ENCODE measurements at regions of chr10 and their contacts with region 1.

Region 1: DNA sequence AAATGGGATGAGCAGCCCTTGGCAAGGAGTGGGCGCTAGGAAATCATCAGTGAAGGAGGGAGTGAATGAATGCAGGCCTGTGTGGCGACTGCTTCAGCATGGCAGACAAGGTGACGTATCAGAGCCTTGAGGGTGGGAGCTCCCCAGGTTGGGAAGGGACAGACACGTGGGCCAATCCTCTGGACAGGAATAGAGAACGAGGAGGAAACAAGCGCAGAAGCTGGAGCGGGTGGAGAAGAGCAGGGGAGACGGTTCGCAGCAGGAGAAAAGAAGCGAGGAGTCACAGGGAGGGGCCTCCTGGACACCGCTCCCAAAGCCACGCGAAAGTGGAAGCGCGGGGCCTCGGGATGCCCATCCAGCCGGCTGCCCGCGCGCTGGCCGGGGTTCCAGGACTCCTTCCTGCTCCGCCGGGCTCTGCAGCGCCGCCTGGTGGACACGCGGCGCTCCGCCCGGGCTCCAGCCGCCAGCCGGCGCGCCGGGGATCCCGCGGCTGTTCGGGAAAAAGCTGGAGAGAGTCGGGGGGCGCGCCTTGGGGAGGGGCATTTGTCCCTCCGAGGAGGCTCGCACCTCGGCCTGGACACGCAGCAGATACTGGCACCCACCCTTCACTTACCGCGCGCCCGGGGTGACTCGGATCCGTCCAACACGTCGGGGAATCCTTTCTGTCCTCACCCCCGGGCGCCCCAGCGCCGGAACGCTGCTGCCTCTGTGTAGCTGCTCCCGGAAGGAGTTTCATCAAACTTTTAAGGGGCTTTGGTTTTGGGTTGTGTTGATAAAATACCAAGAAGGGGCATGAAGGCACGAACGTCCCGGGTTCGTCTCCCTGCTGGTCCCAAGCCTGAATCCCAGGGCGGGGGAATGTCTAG is 6.3 kb downstream of the ZNF503 start:
- DNase-seq: no peak
- ATAC-seq: no peak
- H3K4me3 ChIP-seq: peak overlapping the region; percentile 25 to 49 (median 36)
- H3K27ac ChIP-seq: peak overlapping the region in 2 of 4 donors; percentile 54 to 58
- H3K4me1 ChIP-seq: peaks cover 0 to 14% of the 10 kb centered on the region in 2 donors
- H3K27me3 ChIP-seq: peaks cover 2 to 23% (median 22%) of the 10 kb centered on the region in 3 donors
- CTCF ChIP-seq: peak; percentile 57 to 86 (median 77)
- POLR2A ChIP-seq: no peak

Region 2: GRCh38 chr10:76036111-76036940 is 641.0 kb after region 1 on chr10:
- in situ Hi-C with region 1: loop called (anchors 10 to 25 kb)
- intact Hi-C with region 1: loop called (anchors 1 kb)
- DNase-seq: peak; percentile 53 to 65
- ATAC-seq: peak; percentile 81 to 89
- H3K4me3 ChIP-seq: peak overlapping the region; percentile 29 to 55 (median 38)
- H3K27ac ChIP-seq: peak overlapping the region in 3 of 4 donors; percentile 2 to 50 (median 42)
- H3K4me1 ChIP-seq: peaks cover 6 to 15% of the 10 kb centered on the region in 2 donors
- H3K27me3 ChIP-seq: no peaks in the 10 kb centered on the region
- CTCF ChIP-seq: peak; percentile 73 to 96 (median 77)
- POLR2A ChIP-seq: no peak